ENCODE measurements at regions of chr1 and their contacts with region 1.

Region 1: DNA sequence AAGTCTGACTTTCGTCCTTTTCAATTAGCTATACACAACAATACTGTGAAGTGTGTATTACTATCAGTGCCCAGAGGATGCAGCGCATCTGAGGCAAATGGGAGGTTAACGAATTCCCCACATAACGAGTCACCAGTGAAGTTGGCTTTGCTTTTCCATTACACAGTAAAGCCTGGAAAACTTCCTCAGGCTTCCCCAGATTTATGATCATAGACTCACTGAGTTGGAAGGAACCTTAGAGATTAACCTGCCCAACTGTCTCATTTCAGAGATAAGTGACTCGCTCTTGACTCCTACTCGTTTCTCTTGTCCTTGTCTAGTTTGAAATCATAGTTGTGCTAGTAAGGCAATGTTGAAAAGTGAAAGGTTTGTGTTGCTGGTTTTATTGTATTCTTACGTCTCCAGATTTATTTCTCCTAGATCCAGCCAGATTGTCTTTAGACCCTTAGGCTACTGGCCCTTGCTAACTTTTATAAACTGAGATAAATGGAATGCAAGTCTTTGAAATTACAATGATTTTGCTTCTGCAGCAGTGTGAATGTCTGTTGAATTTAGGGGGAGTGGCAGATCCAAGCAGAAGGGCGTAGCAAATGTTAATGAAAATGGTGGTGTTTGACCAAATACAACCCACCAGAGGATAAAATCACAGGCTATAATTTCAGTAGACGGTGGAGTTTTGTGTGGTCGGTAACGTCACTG is 17.3 kb downstream of the S1PR1 start:
- DNase-seq: no peak
- H3K4me3 Mint-ChIP-seq: no peak overlapping the region
- H3K27ac Mint-ChIP-seq: no peak overlapping the region
- H3K4me1 Mint-ChIP-seq: peaks cover 38% of the 10 kb centered on the region
- H3K27me3 Mint-ChIP-seq: no peaks in the 10 kb centered on the region

Region 2: GRCh38 chr1:101198842-101199636 is 55.1 kb before region 1 on chr1:
- intact Hi-C with region 1: loop called (anchors 1 kb)
- DNase-seq: no peak
- H3K4me3 Mint-ChIP-seq: peak overlapping the region; percentile 9
- H3K27ac Mint-ChIP-seq: peak overlapping the region; percentile 85
- H3K4me1 Mint-ChIP-seq: peaks cover 35% of the 10 kb centered on the region
- H3K27me3 Mint-ChIP-seq: no peaks in the 10 kb centered on the region